MCF 10A (cell line): ENCODE measurements at regions of chr2 and their contacts with region 1.

Region 1: DNA sequence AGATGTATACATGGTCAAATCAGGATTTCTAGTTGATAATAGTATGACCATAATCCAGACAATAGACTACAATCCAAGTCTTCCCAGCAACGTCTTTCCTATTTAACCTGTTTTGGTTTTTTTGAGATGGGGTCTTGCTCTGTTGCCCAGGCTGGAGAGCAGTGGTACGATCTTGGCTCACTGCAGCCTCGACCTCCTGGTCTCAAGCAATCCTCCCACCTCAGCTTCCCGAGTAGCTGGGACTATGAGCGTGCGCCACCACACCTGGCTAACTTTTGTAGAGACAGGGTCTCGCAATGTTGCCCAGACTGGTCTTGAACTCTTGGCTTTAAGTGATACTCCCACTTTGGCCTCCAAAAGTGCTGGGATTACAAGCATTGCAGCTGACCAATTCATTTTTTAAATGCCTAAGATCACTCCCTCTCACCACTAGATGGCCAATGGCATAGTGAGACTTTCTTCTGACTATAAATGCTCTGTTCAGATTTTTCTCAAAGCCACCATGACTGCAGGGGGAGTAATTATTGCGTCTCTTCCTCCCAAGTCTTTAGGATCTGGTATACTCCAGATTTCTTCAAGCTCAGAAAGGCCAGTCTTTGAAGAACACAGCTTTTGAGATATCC is 47.6 kb downstream of the HNRNPLL start:
- DNase-seq: peak; percentile 30
- H3K4me3 Mint-ChIP-seq: no peak overlapping the region
- H3K27ac Mint-ChIP-seq: no peak overlapping the region
- H3K4me1 Mint-ChIP-seq: no peaks in the 10 kb centered on the region
- H3K27me3 Mint-ChIP-seq: no peaks in the 10 kb centered on the region
- CTCF ChIP-seq: peak; percentile 28

Region 2: DNA sequence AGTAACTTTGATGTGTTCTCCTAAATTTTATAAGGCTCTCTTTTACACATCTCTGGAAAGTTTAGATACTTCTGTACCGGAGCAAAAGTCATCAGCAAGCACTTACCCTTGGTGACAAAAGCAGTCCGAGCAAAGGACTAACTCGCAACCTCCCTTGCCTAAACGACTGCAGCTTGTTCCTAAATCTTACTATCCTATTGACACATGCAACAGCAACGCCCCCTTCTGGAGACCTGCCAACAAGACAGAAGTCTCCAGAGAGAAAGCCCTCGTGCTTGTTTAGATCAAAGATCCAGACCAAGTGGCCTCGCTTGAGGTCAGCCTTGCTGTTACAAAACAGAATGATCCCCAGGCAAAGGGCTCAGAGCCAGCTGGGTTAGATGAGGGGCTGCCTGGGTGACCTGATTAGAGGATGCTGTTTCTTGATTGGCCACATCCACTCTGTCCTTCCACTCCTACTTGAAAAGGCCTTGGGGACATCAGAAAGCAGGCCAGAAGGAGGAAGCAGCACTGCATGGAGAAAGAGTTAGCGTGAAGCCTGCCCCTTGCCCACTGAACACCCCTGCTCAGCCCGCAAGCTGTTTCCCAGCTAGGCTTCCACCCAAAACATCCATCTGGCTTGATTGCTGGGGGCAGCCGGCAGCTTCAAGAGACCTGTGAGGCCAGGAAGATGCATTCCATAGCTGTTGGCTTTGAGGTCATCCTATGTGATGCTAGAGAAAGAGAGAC is 46.6 kb before region 1 on chr2:
- CTCF ChIA-PET with region 1: no interaction called
- POLR2A ChIA-PET with region 1: no interaction called
- intact Hi-C with region 1: no loop called
- DNase-seq: peak; percentile 95
- H3K4me3 Mint-ChIP-seq: no peak overlapping the region
- H3K27ac Mint-ChIP-seq: no peak overlapping the region
- H3K4me1 Mint-ChIP-seq: peaks cover 34% of the 10 kb centered on the region
- H3K27me3 Mint-ChIP-seq: no peaks in the 10 kb centered on the region
- CTCF ChIP-seq: peak; percentile 51

Region 3: GRCh38 chr2:38740851-38741731 is 186.0 kb after region 1 on chr2:
- CTCF ChIA-PET with region 1: interaction called, 10 read pairs
- POLR2A ChIA-PET with region 1: interaction called, 3 read pairs
- intact Hi-C with region 1: no loop called
- DNase-seq: peak; percentile 33
- H3K4me3 Mint-ChIP-seq: no peak overlapping the region
- H3K27ac Mint-ChIP-seq: no peak overlapping the region
- H3K4me1 Mint-ChIP-seq: peaks cover 5% of the 10 kb centered on the region
- H3K27me3 Mint-ChIP-seq: no peaks in the 10 kb centered on the region
- CTCF ChIP-seq: peak; percentile 45